Activated CD4-positive, alpha-beta T cell treated with anti-CD3 and anti-CD28 coated beads for 36 hours (primary cell): ENCODE measurements at regions of chr5 and their contacts with region 1.

Region 1: GRCh38 chr5:115296124-115297022 is at the start of gene CCDC112:
- DNase-seq: peak; percentile 94
- ATAC-seq: peak; percentile 93
- H3K4me3 Mint-ChIP-seq: peak within 1 kb of the TSS; percentile 77
- H3K27ac Mint-ChIP-seq: peak within 1 kb of the TSS; percentile 44
- H3K4me1 Mint-ChIP-seq: peaks cover 7% of the 10 kb centered on the region
- H3K27me3 Mint-ChIP-seq: peaks cover 3% of the 10 kb centered on the region
- total RNA-seq, gene CCDC112: 2.2 to 4.1 TPM

Region 2: DNA sequence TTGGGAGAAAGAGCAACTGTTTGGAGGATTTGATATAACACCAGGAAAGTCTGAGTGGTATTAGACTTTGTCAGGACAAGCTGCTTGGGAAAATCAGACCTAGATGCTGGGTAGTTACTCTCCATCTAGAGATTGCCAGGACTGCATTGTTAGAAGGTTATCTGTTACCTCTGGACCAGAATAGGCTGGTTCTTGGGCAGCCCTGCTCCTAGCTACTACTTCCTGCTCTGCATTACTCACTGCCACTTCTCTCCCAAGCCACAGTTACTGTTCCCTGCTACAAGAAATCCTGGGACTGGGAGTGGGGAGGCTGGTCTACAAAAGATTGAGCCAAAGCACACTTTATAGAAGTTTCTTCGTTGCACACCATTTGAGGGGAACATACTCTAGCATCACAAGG is 1030.0 kb before region 1 on chr5:
- CTCF ChIA-PET with region 1: no interaction called
- POLR2A ChIA-PET with region 1: no interaction called
- intact Hi-C with region 1: no loop called
- DNase-seq: no peak
- ATAC-seq: no peak
- H3K4me3 Mint-ChIP-seq: no peak overlapping the region
- H3K27ac Mint-ChIP-seq: no peak overlapping the region
- H3K4me1 Mint-ChIP-seq: no peaks in the 10 kb centered on the region
- H3K27me3 Mint-ChIP-seq: no peaks in the 10 kb centered on the region

Region 3: DNA sequence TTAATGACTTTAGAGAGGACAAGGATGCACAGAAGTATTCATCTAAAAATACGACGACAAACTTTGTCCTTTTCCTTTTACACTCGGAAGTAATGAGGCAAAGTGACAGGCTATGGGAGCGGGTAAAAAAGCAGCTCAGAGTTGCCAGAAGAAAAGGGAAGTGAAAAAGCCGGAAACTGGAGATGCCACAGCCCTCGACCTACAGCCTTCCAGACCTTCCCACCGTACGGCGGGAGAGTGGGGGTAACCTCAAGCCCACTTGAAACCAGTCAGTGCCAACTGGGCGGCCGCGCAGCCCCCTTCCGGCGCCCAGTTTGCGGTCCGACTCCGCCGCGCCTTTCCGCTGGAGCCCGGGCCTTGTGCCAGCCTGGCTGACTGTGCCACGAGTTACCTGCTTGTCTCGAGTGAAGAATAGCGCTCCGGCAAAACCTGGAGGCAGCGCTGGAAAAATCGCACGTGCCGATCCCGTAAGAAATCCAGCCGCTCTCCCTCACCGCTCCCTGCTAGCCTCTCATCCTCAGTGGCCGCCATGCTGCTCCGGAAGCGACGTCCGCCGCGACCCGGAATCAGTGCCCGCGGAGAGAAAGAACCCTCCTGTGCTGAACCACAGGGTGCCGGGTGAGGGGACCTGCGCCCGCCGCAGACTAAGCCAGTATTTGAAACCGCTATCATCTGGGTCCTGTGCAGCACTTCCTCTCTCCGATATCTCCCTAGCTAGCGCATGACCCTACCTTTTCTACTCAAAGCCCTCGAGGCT is 33.9 kb before region 1 on chr5 and contains the start of gene PGGT1B:
- CTCF ChIA-PET with region 1: no interaction called
- POLR2A ChIA-PET with region 1: no interaction called
- intact Hi-C with region 1: loop called in 1 of 2 experiments (anchors 1 kb)
- DNase-seq: peak; percentile 86
- ATAC-seq: peak; percentile 97
- H3K4me3 Mint-ChIP-seq: peak within 1 kb of the TSS; percentile 89
- H3K27ac Mint-ChIP-seq: peak within 1 kb of the TSS; percentile 95
- H3K4me1 Mint-ChIP-seq: peaks cover 45% of the 10 kb centered on the region
- H3K27me3 Mint-ChIP-seq: no peaks in the 10 kb centered on the region
- total RNA-seq, gene PGGT1B: 38.9 to 44.3 TPM

Region 4: DNA sequence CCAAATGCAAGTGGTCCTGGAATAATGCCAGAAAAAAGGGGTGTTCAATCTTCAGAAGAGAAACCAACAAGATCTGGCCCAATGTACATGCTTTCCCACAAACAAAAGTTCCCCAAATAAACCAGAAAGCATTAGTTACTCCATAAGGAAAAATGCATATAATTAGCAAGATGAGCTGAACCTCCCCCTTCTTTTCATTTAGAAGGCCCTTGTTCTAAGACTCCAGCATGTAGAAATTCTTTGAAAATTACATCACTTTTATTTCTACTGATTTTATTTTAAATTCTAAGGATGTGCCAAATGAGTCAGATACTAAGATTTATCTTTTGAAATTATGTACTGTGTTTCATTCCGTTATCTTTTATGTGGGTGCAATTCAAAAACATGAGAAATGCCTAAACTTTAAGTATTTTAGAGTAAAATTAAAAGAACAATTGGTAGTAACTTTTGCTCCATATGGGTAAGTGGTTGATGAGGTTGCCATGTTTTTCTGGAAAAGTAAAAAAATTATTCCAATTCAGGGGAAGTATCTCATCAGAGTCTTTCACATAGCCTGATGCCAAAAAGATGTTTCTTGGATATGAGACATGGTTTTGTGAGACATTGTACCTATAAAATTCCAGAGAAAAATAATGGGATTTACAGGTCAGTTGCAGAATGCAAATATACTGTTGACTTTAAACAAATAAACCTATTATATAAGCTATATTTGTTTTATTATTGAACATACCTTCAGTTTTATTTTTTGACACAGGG is 106.6 kb after region 1 on chr5:
- CTCF ChIA-PET with region 1: no interaction called
- POLR2A ChIA-PET with region 1: no interaction called
- intact Hi-C with region 1: no loop called
- DNase-seq: no peak
- ATAC-seq: no peak
- H3K4me3 Mint-ChIP-seq: no peak overlapping the region
- H3K27ac Mint-ChIP-seq: no peak overlapping the region
- H3K4me1 Mint-ChIP-seq: no peaks in the 10 kb centered on the region
- H3K27me3 Mint-ChIP-seq: peaks cover 41% of the 10 kb centered on the region

Region 5: DNA sequence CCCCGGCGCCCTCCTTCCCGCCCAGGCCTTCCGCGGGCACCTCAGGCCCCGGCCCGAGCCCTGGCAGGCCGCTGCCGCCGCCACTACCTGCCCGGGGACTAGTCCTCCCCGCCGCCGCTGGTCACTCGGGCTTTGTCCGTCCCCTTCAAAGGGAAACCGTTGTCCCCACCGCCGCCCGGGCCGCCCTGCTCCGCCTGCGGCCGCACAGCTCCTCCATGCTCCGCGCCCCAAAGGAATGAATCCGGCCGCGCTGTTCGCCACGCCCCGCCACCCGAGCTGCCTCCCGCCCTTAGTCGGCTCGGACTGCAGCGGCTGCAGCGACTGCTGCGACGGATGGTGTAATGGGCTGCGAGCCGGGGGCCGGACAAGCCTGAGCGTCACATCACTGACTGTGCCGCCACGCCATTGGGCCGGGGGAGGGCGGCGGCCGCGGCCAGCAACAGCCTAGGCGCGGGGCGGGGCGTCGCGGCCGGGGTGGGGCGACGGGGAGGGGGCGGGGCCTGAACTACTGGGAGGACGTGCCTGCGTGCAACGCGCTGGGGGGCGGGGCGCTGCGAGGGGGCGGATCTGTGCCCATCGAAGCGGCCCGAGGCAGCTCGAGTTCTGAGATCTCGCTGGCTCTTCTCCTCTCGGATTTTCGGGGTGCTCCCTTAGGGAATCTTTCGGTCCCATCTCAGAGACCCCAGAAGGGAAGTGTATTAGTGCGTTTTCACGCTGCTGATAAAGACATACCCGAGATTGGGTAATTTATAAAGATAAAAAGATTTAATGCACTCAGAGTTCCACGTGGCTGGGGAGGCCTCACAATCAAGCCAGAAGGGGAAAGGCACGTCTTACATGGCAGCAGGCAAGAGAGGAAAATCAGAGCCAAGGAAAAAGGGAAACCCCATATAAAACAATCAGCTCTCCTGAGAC is 248.3 kb after region 1 on chr5 and contains the start of gene FEM1C:
- CTCF ChIA-PET with region 1: no interaction called
- POLR2A ChIA-PET with region 1: no interaction called
- intact Hi-C with region 1: loop called (anchors 1 kb)
- DNase-seq: peak; percentile 100
- ATAC-seq: peak; percentile 93
- H3K4me3 Mint-ChIP-seq: peak within 1 kb of the TSS; percentile 96
- H3K27ac Mint-ChIP-seq: peak within 1 kb of the TSS; percentile 97
- H3K4me1 Mint-ChIP-seq: peaks cover 41% of the 10 kb centered on the region
- H3K27me3 Mint-ChIP-seq: no peaks in the 10 kb centered on the region
- total RNA-seq, gene FEM1C: 15.8 to 15.9 TPM

Region 6: GRCh38 chr5:116084871-116085715 is 788.7 kb after region 1 on chr5 and contains the start of gene COMMD10:
- CTCF ChIA-PET with region 1: no interaction called
- POLR2A ChIA-PET with region 1: no interaction called
- intact Hi-C with region 1: loop called (anchors 5 to 10 kb)
- DNase-seq: peak; percentile 86
- ATAC-seq: peak; percentile 87
- H3K4me3 Mint-ChIP-seq: peak within 1 kb of the TSS; percentile 88
- H3K27ac Mint-ChIP-seq: peak within 1 kb of the TSS; percentile 94
- H3K4me1 Mint-ChIP-seq: peaks cover 50% of the 10 kb centered on the region
- H3K27me3 Mint-ChIP-seq: no peaks in the 10 kb centered on the region
- total RNA-seq, gene COMMD10: 19.7 to 23.0 TPM